Activated T-helper 2 cell treated with anti-CD3 and anti-CD28 coated beads, Interferon-gamma antibody, Interleukin-2, Interleukin-4, amounts not matched to agents 10 μg/mL and 5 μg/mL and 100 μg/mL, durations not matched to agents 14 hours and 24 hours and 36 hours (primary cell): ENCODE measurements at regions of chr19 and their contacts with region 1.

Region 1: GRCh38 chr19:47225746-47226425 is 5.1 kb downstream of the BBC3 start:
- DNase-seq: peak; percentile 84
- H3K4me3 Mint-ChIP-seq: peak overlapping the region; percentile 34
- H3K27ac Mint-ChIP-seq: peak overlapping the region; percentile 67
- H3K4me1 Mint-ChIP-seq: peaks cover 7% of the 10 kb centered on the region
- H3K27me3 Mint-ChIP-seq: no peaks in the 10 kb centered on the region

Region 2: GRCh38 chr19:47047763-47048405 is 178.0 kb before region 1 on chr19:
- intact Hi-C with region 1: loop called (anchors 5 kb)
- DNase-seq: peak; percentile 77
- H3K4me3 Mint-ChIP-seq: peak overlapping the region; percentile 87
- H3K27ac Mint-ChIP-seq: peak overlapping the region; percentile 82
- H3K4me1 Mint-ChIP-seq: peaks cover 7% of the 10 kb centered on the region
- H3K27me3 Mint-ChIP-seq: peaks cover 3% of the 10 kb centered on the region

Region 3: GRCh38 chr19:47112997-47113849 is 112.7 kb before region 1 on chr19 and contains the start of gene ZC3H4:
- intact Hi-C with region 1: loop called (anchors 2 kb)
- DNase-seq: peak; percentile 100
- H3K4me3 Mint-ChIP-seq: peak within 1 kb of the TSS; percentile 95
- H3K27ac Mint-ChIP-seq: peak within 1 kb of the TSS; percentile 99
- H3K4me1 Mint-ChIP-seq: peaks cover 26% of the 10 kb centered on the region
- H3K27me3 Mint-ChIP-seq: no peaks in the 10 kb centered on the region
- total RNA-seq, gene ZC3H4: 97.1 and 104 TPM in 2 replicates

Region 4: DNA sequence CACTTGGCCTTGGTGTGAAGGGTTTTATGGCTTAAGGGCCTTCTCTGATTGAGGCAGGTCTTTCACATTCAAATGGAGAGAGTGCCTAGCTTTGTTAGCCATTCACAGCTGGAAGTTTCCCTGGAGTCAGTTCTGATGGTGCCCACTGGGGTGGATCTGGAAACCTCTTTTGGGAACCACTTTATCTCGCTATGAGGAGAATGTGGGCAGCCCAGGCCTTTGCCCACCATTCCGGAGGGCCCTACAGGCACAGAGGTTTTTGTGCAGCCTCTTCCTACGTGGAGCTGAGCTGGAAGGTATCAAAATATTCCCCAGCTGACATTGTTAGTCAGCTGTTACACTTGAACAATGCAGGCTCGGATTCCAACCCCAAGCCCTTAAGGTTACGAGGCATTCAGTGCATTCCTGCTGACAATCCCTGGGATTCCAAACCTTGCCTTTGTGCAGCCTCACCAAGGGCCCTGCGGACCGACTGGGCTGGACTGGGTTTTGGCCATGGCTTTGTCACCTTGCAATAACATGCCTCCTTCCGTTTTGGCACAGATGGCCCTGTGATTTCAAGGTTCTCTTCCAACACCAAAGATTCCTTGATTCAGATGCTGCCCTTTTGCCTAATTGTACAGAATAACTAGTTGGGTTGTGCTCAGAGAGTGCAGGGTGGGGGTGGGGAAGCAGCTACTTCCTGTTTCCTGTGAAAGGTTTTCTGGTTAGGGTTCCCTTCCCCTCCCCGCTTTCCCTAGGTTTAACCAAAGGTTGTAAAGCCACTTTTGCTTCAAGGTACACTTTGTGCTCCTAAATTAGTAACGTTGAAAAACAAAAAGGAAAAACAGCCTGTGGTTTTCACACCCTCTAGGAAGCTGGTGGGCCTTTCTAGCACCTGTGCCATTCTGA is 68.2 kb before region 1 on chr19:
- intact Hi-C with region 1: loop called (anchors 5 kb)
- DNase-seq: no peak
- H3K4me3 Mint-ChIP-seq: peak overlapping the region; percentile 31
- H3K27ac Mint-ChIP-seq: peak overlapping the region; percentile 90
- H3K4me1 Mint-ChIP-seq: peaks cover 43% of the 10 kb centered on the region
- H3K27me3 Mint-ChIP-seq: no peaks in the 10 kb centered on the region

Region 5: GRCh38 chr19:47210689-47211316 is 15.1 kb before region 1 on chr19:
- intact Hi-C with region 1: loop called (anchors 1 kb)
- DNase-seq: peak; percentile 66
- H3K4me3 Mint-ChIP-seq: no peak overlapping the region
- H3K27ac Mint-ChIP-seq: peak overlapping the region; percentile 89
- H3K4me1 Mint-ChIP-seq: peaks cover 10% of the 10 kb centered on the region
- H3K27me3 Mint-ChIP-seq: no peaks in the 10 kb centered on the region

Region 6: GRCh38 chr19:47273313-47273977 is 47.6 kb after region 1 on chr19:
- intact Hi-C with region 1: loop called (anchors 1 kb)
- DNase-seq: peak; percentile 88
- H3K4me3 Mint-ChIP-seq: peak overlapping the region; percentile 87
- H3K27ac Mint-ChIP-seq: peak overlapping the region; percentile 93
- H3K4me1 Mint-ChIP-seq: peaks cover 19% of the 10 kb centered on the region
- H3K27me3 Mint-ChIP-seq: no peaks in the 10 kb centered on the region